Activated CD4-positive, alpha-beta T cell treated with anti-CD3 and anti-CD28 coated beads for 36 hours (primary cell): ENCODE measurements at regions of chr1 and their contacts with region 1.

Region 1: GRCh38 chr1:9128520-9129265 is at the start of gene GPR157:
- DNase-seq: peak; percentile 93
- ATAC-seq: peak; percentile 84
- H3K4me3 Mint-ChIP-seq: peak within 1 kb of the TSS; percentile 83
- H3K27ac Mint-ChIP-seq: peak within 1 kb of the TSS; percentile 67
- H3K4me1 Mint-ChIP-seq: peaks cover 37% of the 10 kb centered on the region
- H3K27me3 Mint-ChIP-seq: no peaks in the 10 kb centered on the region
- total RNA-seq, gene GPR157: 2.7 to 3.6 TPM

Region 2: GRCh38 chr1:8823295-8823664 is 305.4 kb before region 1 on chr1:
- CTCF ChIA-PET with region 1: no interaction called
- POLR2A ChIA-PET with region 1: no interaction called
- intact Hi-C with region 1: no loop called
- DNase-seq: no peak
- ATAC-seq: no peak
- H3K4me3 Mint-ChIP-seq: no peak overlapping the region
- H3K27ac Mint-ChIP-seq: no peak overlapping the region
- H3K4me1 Mint-ChIP-seq: peaks cover 3% of the 10 kb centered on the region
- H3K27me3 Mint-ChIP-seq: peaks cover 4% of the 10 kb centered on the region

Region 3: GRCh38 chr1:8955406-8955805 is 173.3 kb before region 1 on chr1:
- CTCF ChIA-PET with region 1: no interaction called
- POLR2A ChIA-PET with region 1: no interaction called
- intact Hi-C with region 1: no loop called
- DNase-seq: no peak
- ATAC-seq: no peak
- H3K4me3 Mint-ChIP-seq: no peak overlapping the region
- H3K27ac Mint-ChIP-seq: no peak overlapping the region
- H3K4me1 Mint-ChIP-seq: peaks cover 13% of the 10 kb centered on the region
- H3K27me3 Mint-ChIP-seq: no peaks in the 10 kb centered on the region

Region 4: GRCh38 chr1:9234223-9235095 is 105.8 kb after region 1 on chr1 and contains the start of gene H6PD:
- CTCF ChIA-PET with region 1: interaction called, 3 read pairs
- POLR2A ChIA-PET with region 1: no interaction called
- intact Hi-C with region 1: loop called in 1 of 2 experiments (anchors 1 kb)
- DNase-seq: peak; percentile 80
- ATAC-seq: peak; percentile 76
- H3K4me3 Mint-ChIP-seq: peak within 1 kb of the TSS; percentile 82
- H3K27ac Mint-ChIP-seq: peak within 1 kb of the TSS; percentile 90
- H3K4me1 Mint-ChIP-seq: peaks cover 41% of the 10 kb centered on the region
- H3K27me3 Mint-ChIP-seq: no peaks in the 10 kb centered on the region
- total RNA-seq, gene H6PD: 8.8 to 9.6 TPM